Endothelial cell of umbilical vein (primary cell): ENCODE measurements at regions of chr11 and their contacts with region 1.

Region 1: GRCh38 chr11:45771566-45772448 is 33.1 kb upstream of the SLC35C1 start:
- DNase-seq: peak; percentile 78
- H3K4me3 ChIP-seq: peak overlapping the region; percentile 39 to 54 (median 50)
- H3K27ac ChIP-seq: no peak overlapping the region
- H3K4me1 ChIP-seq: peaks cover 5% of the 10 kb centered on the region
- H3K27me3 ChIP-seq: peaks cover 0 to 1% of the 10 kb centered on the region in 2 experiments
- CTCF ChIP-seq: peak; percentile 95 to 98
- POLR2A ChIP-seq: no peak

Region 2: DNA sequence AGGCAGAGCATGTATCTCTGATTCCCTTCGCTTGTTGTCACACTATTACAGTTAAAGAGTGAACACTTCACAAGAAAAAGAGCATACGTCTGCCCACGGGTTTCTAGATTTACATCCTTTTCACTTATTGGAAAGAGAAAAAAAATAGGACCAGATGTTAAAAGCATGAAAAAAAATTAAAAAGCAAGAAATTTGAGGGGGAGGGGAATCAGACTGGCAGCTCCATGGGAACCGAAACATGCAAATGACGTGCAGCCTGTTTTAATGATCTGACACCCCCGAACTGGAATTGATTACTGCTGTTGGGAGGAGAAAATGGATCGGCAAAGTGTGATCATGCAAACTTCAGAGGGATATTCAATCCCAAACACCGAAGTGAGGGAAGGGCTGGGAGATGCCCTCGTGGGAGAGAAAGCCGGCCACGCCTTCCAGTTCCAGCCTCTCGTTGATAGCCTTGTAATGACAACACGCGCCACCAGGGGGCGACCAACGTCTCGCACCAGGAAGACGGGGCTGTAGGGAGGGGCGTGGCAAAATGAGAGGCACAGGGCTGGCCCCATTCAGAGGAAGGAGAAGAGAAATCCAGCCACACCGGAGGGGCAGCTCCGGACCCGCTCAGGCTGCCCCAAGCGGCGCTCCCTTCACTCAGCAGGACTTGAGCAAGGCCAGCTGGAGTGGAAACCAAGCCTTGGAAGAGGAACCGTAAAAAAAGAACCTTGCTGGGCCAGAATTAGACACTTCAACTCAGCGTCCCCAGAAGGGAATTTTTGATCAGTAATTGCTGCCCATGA is 431.9 kb before region 1 on chr11:
- CTCF ChIA-PET with region 1: interaction called, 195 read pairs
- POLR2A ChIA-PET with region 1: no interaction called
- dilution Hi-C with region 1: no loop called
- intact Hi-C with region 1: loop called (anchors 1 kb)
- DNase-seq: peak; percentile 77
- H3K4me3 ChIP-seq: no peak overlapping the region
- H3K27ac ChIP-seq: no peak overlapping the region
- H3K4me1 ChIP-seq: no peaks in the 10 kb centered on the region
- H3K27me3 ChIP-seq: peaks cover 4 to 17% of the 10 kb centered on the region in 2 experiments
- CTCF ChIP-seq: peak; percentile 83 to 94
- POLR2A ChIP-seq: no peak

Region 3: GRCh38 chr11:45385844-45386243 is 386.0 kb before region 1 on chr11:
- CTCF ChIA-PET with region 1: interaction called, 10 read pairs
- POLR2A ChIA-PET with region 1: no interaction called
- dilution Hi-C with region 1: no loop called
- intact Hi-C with region 1: no loop called
- DNase-seq: no peak
- H3K4me3 ChIP-seq: no peak overlapping the region
- H3K27ac ChIP-seq: no peak overlapping the region
- H3K4me1 ChIP-seq: no peaks in the 10 kb centered on the region
- H3K27me3 ChIP-seq: peaks cover 0 to 3% of the 10 kb centered on the region in 2 experiments
- CTCF ChIP-seq: no peak
- POLR2A ChIP-seq: no peak

Region 4: GRCh38 chr11:45527898-45528297 is 243.9 kb before region 1 on chr11:
- CTCF ChIA-PET with region 1: interaction called, 3 read pairs
- POLR2A ChIA-PET with region 1: no interaction called
- dilution Hi-C with region 1: no loop called
- intact Hi-C with region 1: loop called (anchors 10 kb)
- DNase-seq: no peak
- H3K4me3 ChIP-seq: no peak overlapping the region
- H3K27ac ChIP-seq: no peak overlapping the region
- H3K4me1 ChIP-seq: no peaks in the 10 kb centered on the region
- H3K27me3 ChIP-seq: no peaks in the 10 kb centered on the region
- CTCF ChIP-seq: no peak
- POLR2A ChIP-seq: no peak

Region 5: GRCh38 chr11:45745065-45745811 is 26.6 kb before region 1 on chr11:
- CTCF ChIA-PET with region 1: interaction called, 13 read pairs
- POLR2A ChIA-PET with region 1: no interaction called
- dilution Hi-C with region 1: no loop called
- intact Hi-C with region 1: no loop called
- DNase-seq: no peak
- H3K4me3 ChIP-seq: no peak overlapping the region
- H3K27ac ChIP-seq: no peak overlapping the region
- H3K4me1 ChIP-seq: peaks cover 2% of the 10 kb centered on the region
- H3K27me3 ChIP-seq: peaks cover 3 to 6% of the 10 kb centered on the region in 2 experiments
- CTCF ChIP-seq: no peak
- POLR2A ChIP-seq: no peak

Region 6: GRCh38 chr11:45804761-45805304 is 33.0 kb after region 1 on chr11 and contains the start of gene SLC35C1:
- CTCF ChIA-PET with region 1: interaction called, 23 read pairs
- POLR2A ChIA-PET with region 1: no interaction called
- dilution Hi-C with region 1: no loop called
- intact Hi-C with region 1: loop called (anchors 1 kb)
- DNase-seq: peak; percentile 89
- H3K4me3 ChIP-seq: peak within 1 kb of the TSS; percentile 55 to 70 (median 55)
- H3K27ac ChIP-seq: peak within 1 kb of the TSS; percentile 66
- H3K4me1 ChIP-seq: peaks cover 36% of the 10 kb centered on the region
- H3K27me3 ChIP-seq: no peaks in the 10 kb centered on the region
- CTCF ChIP-seq: peak in 1 of 2 donors; percentile 10
- POLR2A ChIP-seq: peak; percentile 92
- total RNA-seq, gene SLC35C1: 17.1 and 19.8 TPM in 2 replicates

Region 7: DNA sequence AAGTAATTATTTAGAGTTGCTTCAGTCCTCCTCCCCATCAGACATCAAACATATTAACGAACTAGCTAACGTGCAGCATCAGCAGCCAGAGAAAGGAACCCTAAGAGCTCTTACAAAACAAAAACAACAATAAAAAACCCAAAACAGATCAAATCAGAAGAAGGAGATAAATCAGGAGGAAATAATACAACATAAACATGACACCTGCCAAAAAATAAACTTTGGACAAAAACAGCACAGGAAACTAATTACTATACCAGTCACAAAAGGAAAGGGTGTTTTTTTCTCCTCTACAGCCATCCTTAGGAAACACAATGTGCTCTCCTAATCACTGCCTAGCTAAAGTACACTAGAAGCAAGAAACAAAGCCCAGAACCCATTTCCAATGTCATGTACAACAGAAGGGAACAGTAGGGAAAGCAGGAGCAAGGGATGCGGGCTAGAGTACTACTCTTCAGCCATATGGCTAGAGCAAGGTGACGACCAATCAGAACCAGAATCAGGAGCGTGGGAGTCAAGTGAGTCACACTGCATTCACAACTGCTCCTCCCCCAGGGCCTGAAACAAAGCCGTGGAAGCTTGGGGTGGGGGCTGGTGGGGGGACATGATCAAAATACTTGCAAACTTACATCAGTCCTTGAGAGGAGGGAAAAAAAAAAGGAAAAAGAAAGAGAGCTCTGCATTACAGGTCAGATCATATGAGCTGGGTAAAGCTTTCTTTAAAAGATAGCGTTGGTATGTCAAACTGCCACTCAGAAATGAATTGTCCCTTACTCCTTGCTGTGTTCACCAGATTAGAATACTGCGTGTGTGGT is 211.1 kb after region 1 on chr11:
- CTCF ChIA-PET with region 1: no interaction called
- POLR2A ChIA-PET with region 1: no interaction called
- dilution Hi-C with region 1: no loop called
- intact Hi-C with region 1: no loop called
- DNase-seq: peak; percentile 70
- H3K4me3 ChIP-seq: no peak overlapping the region
- H3K27ac ChIP-seq: no peak overlapping the region
- H3K4me1 ChIP-seq: peaks cover 4% of the 10 kb centered on the region
- H3K27me3 ChIP-seq: no peaks in the 10 kb centered on the region
- CTCF ChIP-seq: no peak
- POLR2A ChIP-seq: no peak

Region 8: DNA sequence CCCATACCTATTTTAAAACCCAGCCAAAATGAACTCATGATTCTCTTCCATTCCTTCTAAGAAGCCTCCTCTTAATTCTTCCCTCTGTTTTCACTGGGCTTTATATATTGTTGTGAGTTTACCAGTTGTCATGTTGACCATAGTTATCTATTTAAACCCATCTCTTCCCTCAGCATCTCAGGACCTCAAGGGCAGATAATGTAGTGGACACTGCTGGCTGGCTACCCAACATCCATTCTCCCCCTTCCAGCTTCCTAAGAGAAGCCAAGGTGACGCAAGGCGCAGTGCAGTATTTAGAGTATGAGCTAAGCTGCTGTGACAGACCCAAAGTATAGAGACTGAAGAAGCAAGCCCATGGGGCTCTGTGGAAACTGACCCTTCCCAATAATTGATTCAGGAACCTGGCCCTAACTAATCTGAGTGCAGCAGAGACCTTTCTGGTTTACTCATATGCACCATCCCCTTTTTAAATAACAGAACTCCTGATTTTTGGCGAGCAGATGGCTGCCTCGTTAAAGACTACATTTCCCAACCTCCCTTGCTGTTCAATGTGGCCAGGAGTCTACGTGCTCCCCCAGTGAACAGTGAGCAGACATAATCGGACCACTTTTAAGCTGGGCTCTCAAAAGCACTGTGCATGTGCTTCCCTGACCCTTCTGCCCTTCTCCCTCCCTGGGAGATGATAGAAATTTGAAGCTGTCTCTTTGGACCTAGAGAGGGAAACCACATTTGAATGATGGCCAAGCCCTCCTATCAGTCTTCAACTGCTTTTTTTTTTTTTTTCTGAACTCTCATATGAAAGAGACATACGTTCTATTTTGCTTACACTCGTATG is 477.5 kb after region 1 on chr11:
- CTCF ChIA-PET with region 1: no interaction called
- POLR2A ChIA-PET with region 1: no interaction called
- dilution Hi-C with region 1: no loop called
- intact Hi-C with region 1: no loop called
- DNase-seq: no peak
- H3K4me3 ChIP-seq: no peak overlapping the region
- H3K27ac ChIP-seq: peak overlapping the region; percentile 43
- H3K4me1 ChIP-seq: peaks cover 6% of the 10 kb centered on the region
- H3K27me3 ChIP-seq: no peaks in the 10 kb centered on the region
- CTCF ChIP-seq: no peak
- POLR2A ChIP-seq: no peak